ENCODE measurements at regions of chr12 and their contacts with region 1.

Region 1: DNA sequence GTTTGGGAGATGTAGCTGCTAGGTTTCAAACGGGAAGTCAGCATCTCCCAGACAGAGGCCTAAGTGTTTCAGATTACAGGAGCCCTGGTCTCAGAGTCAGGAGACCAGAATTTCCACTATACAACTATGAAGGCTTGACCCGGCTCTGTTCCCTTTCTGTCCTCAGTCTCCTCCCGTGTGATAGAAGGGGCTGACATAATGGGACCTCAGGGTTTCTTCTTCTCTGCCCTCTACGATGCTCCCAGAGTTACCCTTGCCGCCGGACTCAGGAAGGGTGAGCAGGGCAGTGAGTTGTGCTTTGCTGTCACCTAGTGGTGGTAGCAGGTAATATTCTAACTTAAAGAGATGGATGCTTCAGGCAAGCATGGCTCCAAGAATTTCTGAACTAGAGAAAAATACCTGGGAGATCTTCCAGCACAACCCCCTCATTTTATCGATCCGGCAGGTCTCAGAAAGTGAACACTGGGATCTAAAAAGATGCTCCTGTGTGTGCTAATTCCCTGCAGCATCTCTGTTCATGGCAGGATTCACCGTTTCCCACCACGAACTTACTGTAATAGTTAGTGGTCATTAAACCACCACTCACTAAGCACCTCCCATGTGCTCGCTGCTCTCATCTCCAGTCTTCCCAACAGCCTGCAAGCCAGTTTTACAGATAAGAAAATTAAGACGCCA is 84.4 kb downstream of the VWF start:
- DNase-seq: peak; percentile 72
- ATAC-seq: peak; percentile 85
- H3K4me3 Mint-ChIP-seq: no peak overlapping the region
- H3K27ac Mint-ChIP-seq: no peak overlapping the region
- H3K4me1 Mint-ChIP-seq: peaks cover 2% of the 10 kb centered on the region
- H3K27me3 Mint-ChIP-seq: no peaks in the 10 kb centered on the region

Region 2: GRCh38 chr12:5965950-5966383 is 74.1 kb before region 1 on chr12:
- CTCF ChIA-PET with region 1: interaction called, 9 read pairs
- POLR2A ChIA-PET with region 1: no interaction called
- intact Hi-C with region 1: loop called (anchors 1 to 5 kb)
- DNase-seq: peak; percentile 73
- ATAC-seq: peak; percentile 91
- H3K4me3 Mint-ChIP-seq: no peak overlapping the region
- H3K27ac Mint-ChIP-seq: no peak overlapping the region
- H3K4me1 Mint-ChIP-seq: no peaks in the 10 kb centered on the region
- H3K27me3 Mint-ChIP-seq: peaks cover 2% of the 10 kb centered on the region

Region 3: DNA sequence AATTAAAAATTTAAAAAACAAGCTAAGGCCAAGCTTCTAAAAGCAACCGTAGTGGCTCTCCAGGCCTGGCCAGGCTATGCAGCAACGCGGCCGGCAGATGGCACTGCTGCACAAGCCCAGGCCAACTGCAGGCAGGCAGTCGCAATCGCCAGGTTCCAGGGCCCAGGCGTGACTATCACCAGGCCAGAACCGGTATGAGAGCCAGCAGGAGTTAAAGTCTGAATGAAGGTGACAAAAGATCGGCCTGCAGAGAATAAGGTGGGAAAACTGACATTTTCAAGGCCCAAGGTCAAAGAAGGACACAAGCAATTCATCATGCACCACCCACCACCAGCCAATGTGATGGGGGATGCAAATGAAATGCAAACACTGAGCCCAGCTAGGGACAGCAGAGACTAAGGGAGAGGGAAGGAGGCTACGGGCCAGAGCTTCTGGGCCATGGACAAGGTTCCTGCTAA is 51.3 kb before region 1 on chr12:
- CTCF ChIA-PET with region 1: interaction called, 215 read pairs
- POLR2A ChIA-PET with region 1: interaction called, 5 read pairs
- intact Hi-C with region 1: loop called (anchors 1 kb)
- DNase-seq: peak; percentile 89
- ATAC-seq: peak; percentile 97
- H3K4me3 Mint-ChIP-seq: no peak overlapping the region
- H3K27ac Mint-ChIP-seq: no peak overlapping the region
- H3K4me1 Mint-ChIP-seq: no peaks in the 10 kb centered on the region
- H3K27me3 Mint-ChIP-seq: no peaks in the 10 kb centered on the region

Region 4: GRCh38 chr12:6053541-6053940 is 13.5 kb after region 1 on chr12:
- CTCF ChIA-PET with region 1: interaction called, 17 read pairs
- POLR2A ChIA-PET with region 1: no interaction called
- intact Hi-C with region 1: no loop called
- DNase-seq: no peak
- ATAC-seq: no peak
- H3K4me3 Mint-ChIP-seq: no peak overlapping the region
- H3K27ac Mint-ChIP-seq: no peak overlapping the region
- H3K4me1 Mint-ChIP-seq: no peaks in the 10 kb centered on the region
- H3K27me3 Mint-ChIP-seq: peaks cover 9% of the 10 kb centered on the region

Region 5: GRCh38 chr12:6092784-6093722 is 53.0 kb after region 1 on chr12:
- CTCF ChIA-PET with region 1: no interaction called
- POLR2A ChIA-PET with region 1: no interaction called
- intact Hi-C with region 1: no loop called
- DNase-seq: no peak
- ATAC-seq: no peak
- H3K4me3 Mint-ChIP-seq: no peak overlapping the region
- H3K27ac Mint-ChIP-seq: no peak overlapping the region
- H3K4me1 Mint-ChIP-seq: no peaks in the 10 kb centered on the region
- H3K27me3 Mint-ChIP-seq: peaks cover 7% of the 10 kb centered on the region

Region 6: GRCh38 chr12:6161124-6161882 is 121.3 kb after region 1 on chr12:
- CTCF ChIA-PET with region 1: no interaction called
- POLR2A ChIA-PET with region 1: no interaction called
- intact Hi-C with region 1: no loop called
- DNase-seq: no peak
- ATAC-seq: no peak
- H3K4me3 Mint-ChIP-seq: no peak overlapping the region
- H3K27ac Mint-ChIP-seq: no peak overlapping the region
- H3K4me1 Mint-ChIP-seq: peaks cover 8% of the 10 kb centered on the region
- H3K27me3 Mint-ChIP-seq: no peaks in the 10 kb centered on the region

Measured in activated CD4-positive, alpha-beta T cell treated with anti-CD3 and anti-CD28 coated beads for 36 hours (primary cell).